CD8-positive, alpha-beta T cell (primary cell): ENCODE measurements at regions of chr6 and their contacts with region 1.

Region 1: DNA sequence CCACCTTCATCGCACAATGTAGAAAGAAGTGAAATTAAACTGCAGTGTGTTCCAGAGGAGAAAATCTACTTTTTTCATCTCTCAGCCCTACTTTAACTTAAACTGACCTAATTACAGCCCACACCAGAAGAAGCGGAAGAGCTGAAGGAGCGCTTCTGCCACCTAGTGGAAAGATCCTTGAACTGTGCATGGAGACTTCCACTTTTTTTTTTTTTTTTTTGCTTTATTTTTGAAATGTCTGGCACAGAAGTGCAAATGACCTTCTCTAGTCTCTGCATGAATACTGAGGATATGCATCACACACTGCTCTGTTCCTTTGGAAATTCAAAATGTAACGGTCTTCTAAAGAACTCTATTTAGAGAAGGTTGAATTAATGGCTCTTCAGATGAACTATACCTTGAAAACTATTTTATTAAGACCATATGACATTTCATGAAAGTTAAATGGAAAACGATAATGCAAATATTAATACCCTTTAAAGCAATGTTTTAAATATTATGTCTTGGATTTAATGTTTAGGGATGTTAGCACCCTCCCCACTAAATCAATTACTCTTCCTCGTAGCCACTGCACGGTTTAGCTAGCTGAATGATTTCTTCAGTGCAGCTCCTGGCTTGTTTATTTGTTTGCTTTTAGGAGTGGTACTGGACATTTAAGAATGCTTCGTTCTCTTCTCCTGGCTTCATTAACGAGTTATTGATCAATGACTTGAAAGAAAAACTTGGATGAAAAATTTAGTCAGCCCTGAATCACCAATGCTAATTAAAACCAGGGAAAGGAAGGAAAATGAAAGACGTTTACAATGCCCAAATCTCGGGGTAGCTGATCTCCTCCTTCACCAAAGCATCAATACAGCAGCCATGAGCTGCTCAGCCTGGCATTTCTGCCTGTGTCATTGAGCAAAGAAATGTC is 569.6 kb upstream of the GJE1 start:
- DNase-seq: peak; percentile 23 to 87 (median 67)
- ATAC-seq: peak; percentile 93
- H3K4me3 ChIP-seq: peak overlapping the region; percentile 41 to 52
- H3K4me3 Mint-ChIP-seq: peak overlapping the region; percentile 79
- H3K27ac ChIP-seq: no peak overlapping the region
- H3K27ac Mint-ChIP-seq: peak overlapping the region; percentile 21
- H3K4me1 ChIP-seq: peaks cover 8% of the 10 kb centered on the region
- H3K4me1 Mint-ChIP-seq: peaks cover 14% of the 10 kb centered on the region
- H3K27me3 ChIP-seq: no peaks in the 10 kb centered on the region
- H3K27me3 Mint-ChIP-seq: peaks cover 4% of the 10 kb centered on the region
- CTCF ChIP-seq: peak; percentile 77

Region 2: DNA sequence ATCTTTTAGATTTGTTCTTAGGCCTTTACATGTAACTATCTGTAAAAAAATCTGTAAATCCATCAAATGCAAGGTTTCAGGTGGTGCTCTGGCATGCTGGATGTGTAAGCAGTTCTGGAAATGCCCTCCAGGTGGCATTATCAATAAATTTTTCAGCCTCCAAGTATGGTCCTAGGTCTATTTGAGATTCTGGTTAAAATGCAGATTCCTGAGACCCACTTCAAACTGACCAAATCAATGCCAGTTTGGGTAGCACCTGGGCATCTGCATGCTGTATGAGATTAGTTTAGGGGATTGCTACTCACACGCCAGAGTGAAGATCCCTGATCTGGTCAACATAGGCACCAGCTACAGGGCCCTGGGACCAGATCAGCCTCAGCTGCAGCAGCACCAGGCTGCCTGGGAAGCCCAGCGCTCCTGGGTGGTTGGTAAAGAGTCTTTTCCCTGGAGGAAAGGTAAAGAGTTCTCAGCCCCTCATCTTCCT is 1681.3 kb before region 1 on chr6:
- CTCF ChIA-PET with region 1: no interaction called
- POLR2A ChIA-PET with region 1: no interaction called
- intact Hi-C with region 1: loop called (anchors 2 to 5 kb)
- DNase-seq: peak in 2 of 9 experiments; percentile 28 to 39
- ATAC-seq: no peak
- H3K4me3 ChIP-seq: no peak overlapping the region
- H3K4me3 Mint-ChIP-seq: no peak overlapping the region
- H3K27ac ChIP-seq: no peak overlapping the region
- H3K27ac Mint-ChIP-seq: no peak overlapping the region
- H3K4me1 ChIP-seq: no peaks in the 10 kb centered on the region
- H3K4me1 Mint-ChIP-seq: no peaks in the 10 kb centered on the region
- H3K27me3 ChIP-seq: no peaks in the 10 kb centered on the region
- H3K27me3 Mint-ChIP-seq: peaks cover 2% of the 10 kb centered on the region
- CTCF ChIP-seq: peak; percentile 39

Region 3: GRCh38 chr6:141309295-141309694 is 253.8 kb before region 1 on chr6:
- CTCF ChIA-PET with region 1: interaction called, 6 read pairs
- POLR2A ChIA-PET with region 1: no interaction called
- intact Hi-C with region 1: loop called (anchors 1 to 2 kb)
- DNase-seq: peak in 3 of 9 experiments; percentile 22 to 40 (median 38)
- ATAC-seq: peak; percentile 68
- H3K4me3 ChIP-seq: no peak overlapping the region
- H3K4me3 Mint-ChIP-seq: no peak overlapping the region
- H3K27ac ChIP-seq: no peak overlapping the region
- H3K27ac Mint-ChIP-seq: no peak overlapping the region
- H3K4me1 ChIP-seq: no peaks in the 10 kb centered on the region
- H3K4me1 Mint-ChIP-seq: no peaks in the 10 kb centered on the region
- H3K27me3 ChIP-seq: no peaks in the 10 kb centered on the region
- H3K27me3 Mint-ChIP-seq: no peaks in the 10 kb centered on the region
- CTCF ChIP-seq: no peak

Region 4: DNA sequence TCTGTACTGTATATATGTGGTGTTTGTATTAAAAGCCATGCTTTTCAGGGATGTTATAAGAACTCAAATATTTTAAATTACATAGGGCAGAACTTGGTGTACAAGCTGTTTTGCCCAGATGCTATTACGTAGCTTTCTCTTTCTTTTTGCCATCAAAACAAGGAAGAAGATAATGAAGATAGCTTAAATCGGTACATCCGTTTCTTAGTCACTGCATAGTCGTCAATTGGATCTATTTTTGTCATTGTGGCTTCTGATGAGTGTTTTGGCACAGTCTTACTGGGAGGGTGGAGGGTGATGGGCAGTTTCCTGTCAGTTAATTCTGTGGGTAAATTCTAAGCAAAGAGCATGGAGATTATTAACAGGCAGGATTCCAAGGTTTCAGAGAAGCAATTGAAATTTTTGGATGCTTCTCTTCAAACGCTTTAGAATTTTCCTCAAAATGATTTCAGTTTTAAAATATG is 79.5 kb before region 1 on chr6:
- CTCF ChIA-PET with region 1: no interaction called
- POLR2A ChIA-PET with region 1: no interaction called
- intact Hi-C with region 1: loop called (anchors 2 to 5 kb)
- DNase-seq: peak in 8 of 9 experiments; percentile 15 to 91 (median 58)
- ATAC-seq: peak; percentile 94
- H3K4me3 ChIP-seq: peak overlapping the region; percentile 41 to 46
- H3K4me3 Mint-ChIP-seq: peak overlapping the region; percentile 76
- H3K27ac ChIP-seq: peak overlapping the region; percentile 65 to 85
- H3K27ac Mint-ChIP-seq: peak overlapping the region; percentile 93
- H3K4me1 ChIP-seq: peaks cover 17% of the 10 kb centered on the region
- H3K4me1 Mint-ChIP-seq: peaks cover 48% of the 10 kb centered on the region
- H3K27me3 ChIP-seq: no peaks in the 10 kb centered on the region
- H3K27me3 Mint-ChIP-seq: no peaks in the 10 kb centered on the region
- CTCF ChIP-seq: no peak